ENCODE measurements at regions of chr17 and their contacts with region 1.

Region 1: DNA sequence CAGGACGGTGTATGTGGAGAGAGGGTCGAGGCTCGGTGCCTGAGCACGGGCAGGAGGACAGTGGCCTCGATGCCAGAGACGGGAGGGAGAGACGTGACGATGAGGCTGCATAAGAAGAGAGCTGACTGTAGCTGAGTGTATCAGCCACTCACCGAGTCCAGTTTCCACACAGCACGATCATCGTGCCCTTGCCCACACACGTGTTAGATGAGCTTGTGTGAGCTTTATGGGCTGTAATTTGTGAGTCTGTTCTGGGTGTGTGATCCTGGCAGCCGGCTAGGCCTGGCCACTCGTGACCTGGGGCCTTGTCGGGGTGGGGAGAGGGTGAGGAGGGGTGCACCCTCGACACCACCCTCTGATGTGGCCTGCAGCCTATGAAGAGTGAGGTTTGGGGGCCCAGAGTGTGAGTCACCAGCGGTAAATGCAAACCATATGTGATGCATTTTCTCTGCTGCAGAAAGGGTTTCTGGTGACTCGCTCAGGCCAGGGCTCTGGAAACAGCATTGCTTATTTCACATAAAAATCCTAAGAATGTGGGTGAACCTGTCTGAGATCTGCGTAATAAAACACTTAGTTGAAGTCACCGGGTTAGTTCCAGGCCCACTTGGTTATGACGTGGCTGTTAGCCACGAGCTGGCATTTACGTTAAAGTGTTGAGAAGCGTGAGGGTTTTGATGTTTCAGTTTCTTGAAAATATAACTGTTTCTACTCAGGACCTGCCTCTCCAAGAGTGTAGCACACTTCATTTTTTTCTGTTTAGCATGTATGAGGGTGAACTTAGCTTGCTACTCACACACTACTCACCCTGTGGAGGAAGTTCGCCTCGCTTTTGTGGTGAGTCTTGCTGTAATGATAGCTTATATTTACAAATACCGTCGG is 4.2 kb downstream of the METRNL start:
- DNase-seq: no peak
- H3K4me3 ChIP-seq: no peak overlapping the region
- H3K27ac ChIP-seq: no peak overlapping the region
- H3K4me1 ChIP-seq: peaks cover 30% of the 10 kb centered on the region
- CTCF ChIP-seq: no peak

Region 2: GRCh38 chr17:82974136-82974952 is 109.2 kb before region 1 on chr17:
- CTCF ChIA-PET with region 1: no interaction called
- POLR2A ChIA-PET with region 1: no interaction called
- intact Hi-C with region 1: loop called (anchors 1 kb)
- DNase-seq: no peak
- H3K4me3 ChIP-seq: no peak overlapping the region
- H3K27ac ChIP-seq: no peak overlapping the region
- H3K4me1 ChIP-seq: peaks cover 40% of the 10 kb centered on the region
- CTCF ChIP-seq: no peak

Region 3: GRCh38 chr17:83103264-83104000 is 19.9 kb after region 1 on chr17:
- CTCF ChIA-PET with region 1: no interaction called
- POLR2A ChIA-PET with region 1: interaction called, 3 read pairs
- intact Hi-C with region 1: loop called (anchors 2 kb)
- DNase-seq: peak; percentile 30
- H3K4me3 ChIP-seq: no peak overlapping the region
- H3K27ac ChIP-seq: no peak overlapping the region
- H3K4me1 ChIP-seq: peaks cover 43% of the 10 kb centered on the region
- CTCF ChIP-seq: no peak

Region 4: GRCh38 chr17:83119987-83120864 is 36.7 kb after region 1 on chr17:
- CTCF ChIA-PET with region 1: no interaction called
- POLR2A ChIA-PET with region 1: no interaction called
- intact Hi-C with region 1: loop called (anchors 1 kb)
- DNase-seq: peak; percentile 98
- H3K4me3 ChIP-seq: peak overlapping the region; percentile 62
- H3K27ac ChIP-seq: peak overlapping the region; percentile 89
- H3K4me1 ChIP-seq: peaks cover 30% of the 10 kb centered on the region
- CTCF ChIP-seq: no peak

Region 5: GRCh38 chr17:83174285-83175118 is 90.9 kb after region 1 on chr17:
- CTCF ChIA-PET with region 1: no interaction called
- POLR2A ChIA-PET with region 1: no interaction called
- intact Hi-C with region 1: loop called (anchors 1 kb)
- DNase-seq: peak; percentile 90
- H3K4me3 ChIP-seq: peak overlapping the region; percentile 3
- H3K27ac ChIP-seq: peak overlapping the region; percentile 41
- H3K4me1 ChIP-seq: peaks cover 25% of the 10 kb centered on the region
- CTCF ChIP-seq: peak; percentile 75